Naive thymus-derived CD4-positive, alpha-beta T cell (primary cell): ENCODE measurements at regions of chrX and their contacts with region 1.

Region 1: DNA sequence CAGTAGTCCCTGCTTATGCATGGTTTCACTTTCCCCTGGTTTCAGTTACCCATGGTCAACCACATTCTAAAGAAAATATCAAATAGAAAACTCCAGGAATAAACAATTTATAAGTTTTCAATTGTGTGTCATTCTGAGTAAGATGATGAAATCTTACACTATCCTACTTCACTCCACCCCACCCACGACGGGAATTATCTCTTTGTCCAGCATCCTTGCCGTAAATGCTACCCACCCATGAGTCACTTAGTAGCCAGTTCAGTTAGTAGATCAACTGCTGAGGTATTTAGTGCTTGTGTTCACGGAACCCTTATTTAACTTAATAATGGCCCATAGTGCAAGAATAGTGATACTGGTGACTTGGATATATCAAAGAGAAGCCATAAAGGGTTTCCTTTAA is 91.4 kb downstream of the KLHL13 start:
- DNase-seq: no peak
- ATAC-seq: no peak
- H3K4me3 ChIP-seq: no peak overlapping the region
- H3K4me3 Mint-ChIP-seq: no peak overlapping the region
- H3K27ac ChIP-seq: no peak overlapping the region
- H3K27ac Mint-ChIP-seq: no peak overlapping the region
- H3K4me1 ChIP-seq: no peaks in the 10 kb centered on the region
- H3K4me1 Mint-ChIP-seq: no peaks in the 10 kb centered on the region
- H3K27me3 ChIP-seq: no peaks in the 10 kb centered on the region
- H3K27me3 Mint-ChIP-seq: no peaks in the 10 kb centered on the region

Region 2: GRCh38 chrX:117990438-117990837 is 34.8 kb before region 1 on chrX:
- CTCF ChIA-PET with region 1: no interaction called
- POLR2A ChIA-PET with region 1: no interaction called
- intact Hi-C with region 1: no loop called
- DNase-seq: no peak
- ATAC-seq: no peak
- H3K4me3 ChIP-seq: no peak overlapping the region
- H3K4me3 Mint-ChIP-seq: no peak overlapping the region
- H3K27ac ChIP-seq: no peak overlapping the region
- H3K27ac Mint-ChIP-seq: no peak overlapping the region
- H3K4me1 ChIP-seq: no peaks in the 10 kb centered on the region
- H3K4me1 Mint-ChIP-seq: peaks cover 0 to 2% (median 0%) of the 10 kb centered on the region in 7 donors
- H3K27me3 ChIP-seq: no peaks in the 10 kb centered on the region
- H3K27me3 Mint-ChIP-seq: no peaks in the 10 kb centered on the region

Region 3: GRCh38 chrX:118100091-118100490 is 74.9 kb after region 1 on chrX:
- CTCF ChIA-PET with region 1: no interaction called
- POLR2A ChIA-PET with region 1: no interaction called
- intact Hi-C with region 1: loop called in 1 of 2 experiments (anchors 2 kb)
- DNase-seq: no peak
- ATAC-seq: no peak
- H3K4me3 ChIP-seq: no peak overlapping the region
- H3K4me3 Mint-ChIP-seq: no peak overlapping the region
- H3K27ac ChIP-seq: no peak overlapping the region
- H3K27ac Mint-ChIP-seq: no peak overlapping the region
- H3K4me1 ChIP-seq: no peaks in the 10 kb centered on the region
- H3K4me1 Mint-ChIP-seq: peaks cover 0 to 2% (median 0%) of the 10 kb centered on the region in 7 donors
- H3K27me3 ChIP-seq: no peaks in the 10 kb centered on the region
- H3K27me3 Mint-ChIP-seq: no peaks in the 10 kb centered on the region